AG04450 (cell line): ENCODE measurements at regions of chr18 and their contacts with region 1.

Region 1: GRCh38 chr18:11955239-11956029 is 25.9 kb upstream of the IMPA2 start:
- DNase-seq: peak; percentile 67
- H3K4me3 ChIP-seq: no peak overlapping the region
- H3K27ac ChIP-seq: peak overlapping the region; percentile 75
- H3K27me3 ChIP-seq: no peaks in the 10 kb centered on the region
- CTCF ChIP-seq: no peak

Region 2: DNA sequence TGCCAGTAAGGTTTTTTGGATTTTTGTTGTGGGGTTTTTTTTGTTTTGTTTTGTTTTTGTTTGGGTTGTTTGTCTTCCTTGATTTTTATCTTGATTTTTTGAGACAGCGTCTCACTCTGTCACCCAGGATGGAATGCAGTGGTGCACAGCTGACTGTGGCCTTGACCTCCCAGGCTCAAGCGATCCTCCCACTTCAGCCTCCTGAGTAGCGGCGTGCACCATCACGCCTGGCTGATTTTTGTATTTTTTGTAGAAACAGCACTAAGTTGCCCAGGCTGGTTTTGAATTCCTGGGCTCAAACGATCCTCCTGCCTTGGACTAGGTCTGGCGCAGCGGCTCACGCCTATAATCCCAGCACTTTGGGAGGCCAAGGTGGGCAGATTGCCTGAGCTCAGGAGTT is 63.7 kb before region 1 on chr18:
- CTCF ChIA-PET with region 1: no interaction called
- POLR2A ChIA-PET with region 1: no interaction called
- DNase-seq: no peak
- H3K4me3 ChIP-seq: no peak overlapping the region
- H3K27ac ChIP-seq: no peak overlapping the region
- H3K27me3 ChIP-seq: no peaks in the 10 kb centered on the region
- CTCF ChIP-seq: no peak

Region 3: GRCh38 chr18:11908182-11909060 is 47.0 kb before region 1 on chr18 and contains the start of gene MPPE1:
- CTCF ChIA-PET with region 1: interaction called, 11 read pairs
- POLR2A ChIA-PET with region 1: no interaction called
- DNase-seq: peak; percentile 43
- H3K4me3 ChIP-seq: peak within 1 kb of the TSS; percentile 79
- H3K27ac ChIP-seq: peak within 1 kb of the TSS; percentile 93
- H3K27me3 ChIP-seq: no peaks in the 10 kb centered on the region
- CTCF ChIP-seq: 0 out of 2 replicates have a peak, but pooled peaks have one; percentile 7
- polyA plus RNA-seq, gene MPPE1: 21.1 and 21.9 TPM in 2 replicates

Region 4: DNA sequence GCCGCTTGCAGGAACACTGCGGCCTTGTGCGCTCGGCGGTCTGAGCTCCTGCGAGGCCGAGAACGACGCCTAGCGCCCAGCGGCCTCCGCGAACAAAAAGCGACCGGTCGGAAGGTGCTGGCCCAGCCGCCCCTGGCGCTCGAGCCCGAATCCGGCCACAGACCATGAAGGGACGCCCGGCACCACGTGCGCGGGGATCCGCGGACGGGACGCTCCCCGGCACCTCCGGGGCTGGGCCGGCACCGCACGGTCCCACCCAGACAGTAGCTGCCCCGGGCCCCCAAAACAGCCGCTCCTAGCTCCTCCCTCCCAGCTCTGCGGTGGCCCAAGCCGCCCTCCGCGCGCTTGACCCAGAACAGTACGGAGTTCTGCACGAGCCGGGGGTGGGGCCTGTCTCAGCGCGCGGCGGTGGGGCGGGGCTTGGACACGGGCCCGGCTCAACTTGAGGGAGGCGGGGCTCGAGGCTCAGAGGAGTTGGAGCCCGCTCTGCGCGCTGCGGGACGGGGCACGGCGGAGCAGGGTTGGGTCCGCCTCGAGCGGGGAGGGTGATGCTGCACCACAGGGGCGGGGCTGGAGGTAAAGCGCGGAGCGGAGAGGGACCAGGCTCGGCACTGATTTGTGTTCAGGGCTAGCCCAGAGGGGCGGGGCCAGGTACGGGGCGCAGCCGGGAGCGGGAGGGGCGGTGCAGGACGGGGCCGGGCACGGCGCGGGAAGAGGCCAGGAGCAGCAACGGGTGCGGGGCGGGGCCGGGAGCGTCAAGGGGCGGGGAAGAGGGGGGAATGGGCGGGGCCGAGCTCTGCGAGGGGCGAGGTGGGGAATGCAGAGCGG is 25.3 kb after region 1 on chr18:
- CTCF ChIA-PET with region 1: interaction called, 6 read pairs
- POLR2A ChIA-PET with region 1: interaction called, 11 read pairs
- DNase-seq: peak; percentile 95
- H3K4me3 ChIP-seq: peak overlapping the region; percentile 68
- H3K27ac ChIP-seq: peak overlapping the region; percentile 87
- H3K27me3 ChIP-seq: no peaks in the 10 kb centered on the region
- CTCF ChIP-seq: peak; percentile 29; the same call in 1 of the 2 replicates